Breast epithelium (tissue), 4 donors: ENCODE measurements at regions of chr2 and their contacts with region 1.

Region 1: DNA sequence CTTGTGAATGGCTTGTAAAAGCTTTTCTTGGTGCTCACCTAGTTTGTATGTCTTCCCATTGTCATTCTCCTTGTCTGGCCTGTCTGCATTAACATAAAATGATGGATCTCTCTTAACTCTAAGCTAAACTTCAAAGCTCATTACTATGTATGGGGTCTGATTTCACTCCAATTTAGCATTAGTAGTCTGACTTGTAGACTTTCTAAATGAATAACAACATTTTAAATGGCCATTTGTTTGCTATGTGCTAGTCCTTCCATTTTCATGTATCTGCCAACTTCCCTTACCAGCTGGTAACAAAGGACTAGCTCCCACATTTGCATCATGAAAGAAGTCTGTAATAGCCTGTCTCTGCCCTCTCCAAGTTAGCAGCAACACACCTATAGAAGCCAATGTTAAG is 324.2 kb upstream of the RGPD4 start:
- DNase-seq: no peak
- H3K4me3 ChIP-seq: no peak overlapping the region
- H3K27ac ChIP-seq: no peak overlapping the region
- H3K4me1 ChIP-seq: no peaks in the 10 kb centered on the region
- H3K27me3 ChIP-seq: no peaks in the 10 kb centered on the region
- CTCF ChIP-seq: no peak
- POLR2A ChIP-seq: no peak

Region 2: GRCh38 chr2:106189764-106190468 is 1312.6 kb before region 1 on chr2:
- intact Hi-C with region 1: no loop called
- DNase-seq: no peak
- H3K4me3 ChIP-seq: no peak overlapping the region
- H3K27ac ChIP-seq: no peak overlapping the region
- H3K4me1 ChIP-seq: peaks cover 0 to 7% of the 10 kb centered on the region in 2 donors
- H3K27me3 ChIP-seq: no peaks in the 10 kb centered on the region
- CTCF ChIP-seq: no peak
- POLR2A ChIP-seq: no peak

Region 3: DNA sequence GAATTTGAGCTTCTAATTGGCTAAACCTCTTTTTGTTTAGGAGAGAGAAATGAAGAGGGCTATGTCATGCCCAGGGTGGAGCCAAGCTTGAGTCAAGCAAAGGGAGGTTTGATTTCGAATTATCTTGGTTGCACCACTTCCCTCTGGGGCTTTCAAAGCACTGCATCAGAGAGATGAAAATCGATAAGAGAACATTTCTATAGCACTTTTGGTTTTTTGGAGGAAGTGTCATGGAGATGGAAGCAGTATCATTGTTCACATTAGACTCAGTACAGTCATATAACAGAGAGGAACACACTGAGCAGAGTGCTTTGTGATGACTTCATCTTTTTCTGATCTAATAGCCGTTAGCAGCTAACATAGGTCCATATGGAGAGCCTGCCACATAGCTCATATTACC is 1188.1 kb before region 1 on chr2:
- intact Hi-C with region 1: no loop called
- DNase-seq: no peak
- H3K4me3 ChIP-seq: no peak overlapping the region
- H3K27ac ChIP-seq: no peak overlapping the region
- H3K4me1 ChIP-seq: no peaks in the 10 kb centered on the region
- H3K27me3 ChIP-seq: peaks cover 0 to 3% of the 10 kb centered on the region in 2 donors
- CTCF ChIP-seq: no peak
- POLR2A ChIP-seq: no peak

Region 4: DNA sequence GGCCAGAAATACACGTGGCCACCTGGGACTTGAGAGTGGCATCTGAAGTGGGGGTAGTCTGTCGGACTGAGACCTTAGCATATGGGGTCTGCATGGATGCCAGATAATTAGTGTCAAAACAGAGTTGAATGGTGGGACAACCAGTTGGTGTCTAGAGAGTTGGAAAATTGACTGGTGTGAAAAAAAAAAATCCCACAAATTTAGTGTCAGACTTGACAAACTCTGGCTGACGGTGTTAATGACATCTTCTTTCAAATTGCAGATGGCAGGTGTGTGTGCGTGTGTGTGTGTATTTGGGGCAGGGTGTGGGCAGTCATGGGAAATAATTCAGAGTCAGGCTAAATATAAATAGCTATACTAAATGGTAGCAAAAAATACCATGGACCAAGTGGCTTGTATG is 41.2 kb before region 1 on chr2:
- intact Hi-C with region 1: loop called (anchors 2 kb)
- DNase-seq: no peak
- H3K4me3 ChIP-seq: no peak overlapping the region
- H3K27ac ChIP-seq: no peak overlapping the region
- H3K4me1 ChIP-seq: no peaks in the 10 kb centered on the region
- H3K27me3 ChIP-seq: no peaks in the 10 kb centered on the region
- CTCF ChIP-seq: no peak
- POLR2A ChIP-seq: no peak

Region 5: DNA sequence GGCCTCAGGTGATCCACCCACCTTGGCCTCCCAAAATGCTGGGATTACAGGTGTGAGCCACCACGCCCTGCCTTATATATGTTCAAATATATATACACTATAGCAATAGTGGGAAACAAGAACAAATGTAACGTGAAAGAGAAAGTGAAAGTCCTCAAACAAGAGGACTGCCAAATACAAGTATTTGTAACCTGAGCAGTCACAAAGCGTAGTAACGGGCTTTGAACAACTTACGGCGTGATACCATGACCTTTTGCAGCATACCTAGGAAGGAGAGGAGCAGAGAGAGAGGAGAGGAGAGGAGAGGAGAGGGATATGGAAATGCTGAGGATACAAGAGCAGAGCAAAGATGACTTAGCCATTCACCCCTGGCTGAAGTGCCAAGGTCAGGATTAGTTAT is 210.3 kb after region 1 on chr2:
- intact Hi-C with region 1: no loop called
- DNase-seq: no peak
- H3K4me3 ChIP-seq: peak overlapping the region in 1 of 3 donors; percentile 36
- H3K27ac ChIP-seq: no peak overlapping the region
- H3K4me1 ChIP-seq: no peaks in the 10 kb centered on the region
- H3K27me3 ChIP-seq: no peaks in the 10 kb centered on the region
- CTCF ChIP-seq: no peak
- POLR2A ChIP-seq: no peak

Region 6: DNA sequence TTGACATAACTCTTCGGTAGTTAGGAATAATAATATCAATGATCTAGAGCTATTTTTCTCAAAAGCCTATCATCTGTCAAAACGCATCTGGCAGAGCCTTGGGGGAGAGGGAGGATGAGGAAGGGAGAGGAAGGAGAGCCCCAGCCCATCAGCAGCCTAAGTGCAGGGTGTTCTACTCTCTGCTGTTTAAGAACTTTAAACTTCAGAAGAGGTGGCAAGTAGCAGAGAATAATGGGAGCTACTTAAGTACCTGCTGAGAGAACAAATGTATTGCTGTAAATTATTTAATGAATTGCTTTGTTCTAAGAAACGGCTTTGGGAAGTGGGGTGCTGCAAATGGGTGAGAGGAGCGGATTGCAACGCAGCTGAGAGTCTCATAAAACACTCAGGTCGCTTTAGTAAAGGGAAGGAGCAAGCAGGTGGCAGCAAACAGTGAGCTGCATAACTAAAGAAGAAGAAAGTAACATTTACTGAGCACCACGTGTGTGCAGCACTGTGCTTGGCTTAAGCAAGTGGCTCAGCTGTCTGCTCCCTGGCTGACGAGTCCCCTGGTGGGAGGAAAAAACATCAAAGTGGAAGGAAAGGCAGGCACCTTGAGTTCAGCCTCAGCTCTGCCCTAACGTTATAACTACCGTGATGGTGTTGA is 1600.2 kb after region 1 on chr2:
- intact Hi-C with region 1: no loop called
- DNase-seq: no peak
- H3K4me3 ChIP-seq: no peak overlapping the region
- H3K27ac ChIP-seq: no peak overlapping the region
- H3K4me1 ChIP-seq: no peaks in the 10 kb centered on the region
- H3K27me3 ChIP-seq: no peaks in the 10 kb centered on the region
- CTCF ChIP-seq: no peak
- POLR2A ChIP-seq: no peak